ENCODE measurements at regions of chr5 and their contacts with region 1.

Region 1: GRCh38 chr5:119411935-119412602 is 40.2 kb upstream of the HSD17B4 start:
- DNase-seq: no peak
- ATAC-seq: peak; percentile 94

Region 2: GRCh38 chr5:118987988-118988865 is 423.8 kb before region 1 on chr5 and contains the start of gene DTWD2:
- intact Hi-C with region 1: loop called (anchors 2 kb)
- DNase-seq: peak; percentile 97
- ATAC-seq: peak; percentile 98
- total RNA-seq, gene DTWD2: 12.1 TPM

Region 3: GRCh38 chr5:119267958-119268386 is 144.1 kb before region 1 on chr5:
- intact Hi-C with region 1: loop called (anchors 5 kb)
- DNase-seq: peak; percentile 98
- ATAC-seq: peak; percentile 91

Region 4: GRCh38 chr5:119315516-119315949 is 96.5 kb before region 1 on chr5:
- intact Hi-C with region 1: loop called (anchors 2 kb)
- DNase-seq: no peak
- ATAC-seq: peak; percentile 69

Region 5: GRCh38 chr5:119336845-119337580 is 75.1 kb before region 1 on chr5:
- intact Hi-C with region 1: loop called (anchors 5 kb)
- DNase-seq: no peak
- ATAC-seq: no peak